Activated naive CD4-positive, alpha-beta T cell treated with anti-CD3 and anti-CD28 coated beads for 36 hours (primary cell): ENCODE measurements at regions of chr1 and their contacts with region 1.

Region 1: DNA sequence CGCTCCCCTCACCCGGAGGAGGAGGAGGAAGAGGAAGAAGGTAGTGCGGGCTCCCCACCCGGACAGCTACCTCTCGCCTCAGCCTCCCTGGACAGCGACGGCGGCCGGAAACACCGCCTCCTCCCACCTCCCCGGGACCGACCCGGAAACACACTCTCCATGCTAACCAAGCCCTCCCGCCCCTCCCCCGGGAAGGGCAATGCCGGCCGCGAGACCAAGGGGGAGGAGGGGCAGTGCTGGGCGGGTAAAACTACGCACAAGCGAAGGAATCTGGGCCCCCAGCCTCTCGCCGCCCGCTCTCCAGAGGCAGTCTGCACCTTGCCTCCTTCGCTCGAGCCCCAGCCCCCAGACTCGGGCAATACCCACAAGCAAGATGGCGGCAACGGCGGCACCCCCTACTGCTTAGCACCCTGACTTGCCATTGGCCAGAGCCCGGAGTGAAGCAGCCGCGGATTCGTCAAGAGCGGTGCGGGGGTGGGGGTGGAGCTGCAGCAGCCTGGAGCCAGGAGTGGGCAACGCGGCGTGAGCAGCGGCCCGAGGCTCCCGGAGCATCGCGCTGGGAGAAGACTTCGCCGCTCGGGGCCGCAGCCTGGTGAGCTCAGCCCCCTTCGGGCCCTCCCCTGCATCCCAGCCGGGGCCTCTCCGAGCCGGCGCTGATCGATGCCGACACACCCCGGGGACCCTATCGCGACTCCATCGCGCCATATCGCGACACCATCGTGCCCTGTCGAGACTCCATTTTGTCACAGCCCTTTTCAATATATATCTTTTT is at the starts of genes KIAA0319L and NCDN:
- DNase-seq: peak; percentile 98
- H3K4me3 Mint-ChIP-seq: peak within 1 kb of the TSS; percentile 95
- H3K27ac Mint-ChIP-seq: peak within 1 kb of the TSS; percentile 92
- H3K4me1 Mint-ChIP-seq: peaks cover 46% of the 10 kb centered on the region
- H3K27me3 Mint-ChIP-seq: no peaks in the 10 kb centered on the region
- total RNA-seq, gene KIAA0319L: 22.6 to 24.2 TPM
- total RNA-seq, gene NCDN: 12.1 to 13.4 TPM

Region 2: DNA sequence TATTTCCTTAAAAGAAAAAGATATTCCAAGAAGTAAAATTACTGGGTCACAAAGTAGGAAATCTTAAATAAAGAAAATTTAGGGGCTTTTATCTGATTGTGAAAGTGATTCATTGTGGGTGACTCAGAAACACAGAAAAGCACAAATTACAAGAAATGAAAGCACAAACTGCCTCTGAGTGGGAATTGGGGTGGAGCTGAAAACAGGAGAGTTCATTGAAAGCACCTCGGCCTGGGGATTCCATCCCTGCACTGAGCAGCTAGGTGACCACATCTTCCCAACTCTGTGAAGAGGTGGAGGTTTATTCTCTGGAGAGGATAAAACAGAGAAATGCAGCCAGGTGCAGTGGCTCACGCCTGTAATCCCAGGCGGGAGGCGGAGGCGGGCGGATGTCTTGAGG is 757.3 kb before region 1 on chr1:
- CTCF ChIA-PET with region 1: no interaction called
- intact Hi-C with region 1: loop called (anchors 5 kb)
- DNase-seq: peak; percentile 69
- H3K4me3 Mint-ChIP-seq: no peak overlapping the region
- H3K27ac Mint-ChIP-seq: peak overlapping the region; percentile 71
- H3K4me1 Mint-ChIP-seq: peaks cover 39% of the 10 kb centered on the region
- H3K27me3 Mint-ChIP-seq: no peaks in the 10 kb centered on the region

Region 3: GRCh38 chr1:35268282-35269200 is 288.9 kb before region 1 on chr1 and contains the start of gene ZMYM4:
- CTCF ChIA-PET with region 1: no interaction called
- intact Hi-C with region 1: loop called (anchors 10 kb)
- DNase-seq: peak; percentile 91
- H3K4me3 Mint-ChIP-seq: peak within 1 kb of the TSS; percentile 80
- H3K27ac Mint-ChIP-seq: peak within 1 kb of the TSS; percentile 82
- H3K4me1 Mint-ChIP-seq: peaks cover 22% of the 10 kb centered on the region
- H3K27me3 Mint-ChIP-seq: peaks cover 4% of the 10 kb centered on the region
- total RNA-seq, gene ZMYM4: 18.6 to 19.2 TPM

Region 4: GRCh38 chr1:35539073-35539823 is 18.2 kb before region 1 on chr1:
- CTCF ChIA-PET with region 1: interaction called, 5 read pairs
- intact Hi-C with region 1: loop called (anchors 1 kb)
- DNase-seq: peak; percentile 49
- H3K4me3 Mint-ChIP-seq: peak overlapping the region; percentile 70
- H3K27ac Mint-ChIP-seq: peak overlapping the region; percentile 90
- H3K4me1 Mint-ChIP-seq: peaks cover 78% of the 10 kb centered on the region
- H3K27me3 Mint-ChIP-seq: no peaks in the 10 kb centered on the region

Region 5: GRCh38 chr1:35641233-35641866 is 83.9 kb after region 1 on chr1 and contains the start of gene PSMB2:
- CTCF ChIA-PET with region 1: no interaction called
- intact Hi-C with region 1: loop called (anchors 5 kb)
- DNase-seq: peak; percentile 98
- H3K4me3 Mint-ChIP-seq: peak within 1 kb of the TSS; percentile 100
- H3K27ac Mint-ChIP-seq: peak within 1 kb of the TSS; percentile 99
- H3K4me1 Mint-ChIP-seq: peaks cover 30% of the 10 kb centered on the region
- H3K27me3 Mint-ChIP-seq: peaks cover 5% of the 10 kb centered on the region
- total RNA-seq, gene PSMB2: 91.9 to 96.4 TPM

Region 6: GRCh38 chr1:35769759-35770446 is 212.4 kb after region 1 on chr1 and contains the start of gene CLSPN:
- CTCF ChIA-PET with region 1: no interaction called
- intact Hi-C with region 1: loop called (anchors 1 kb)
- DNase-seq: peak; percentile 98
- H3K4me3 Mint-ChIP-seq: peak within 1 kb of the TSS; percentile 98
- H3K27ac Mint-ChIP-seq: peak within 1 kb of the TSS; percentile 97
- H3K4me1 Mint-ChIP-seq: peaks cover 8% of the 10 kb centered on the region
- H3K27me3 Mint-ChIP-seq: no peaks in the 10 kb centered on the region
- total RNA-seq, gene CLSPN: 48.9 to 51.8 TPM